ENCODE measurements at regions of chr6 and their contacts with region 1.

Region 1: GRCh38 chr6:10429638-10430427 is 15.0 kb upstream of the TFAP2A start:
- DNase-seq: no peak
- H3K4me3 ChIP-seq: no peak overlapping the region
- H3K27ac ChIP-seq: no peak overlapping the region
- H3K4me1 ChIP-seq: peaks cover 0 to 9% of the 10 kb centered on the region in 2 donors
- H3K27me3 ChIP-seq: no peaks in the 10 kb centered on the region
- CTCF ChIP-seq: peak in 1 of 3 experiments; percentile 50

Region 2: GRCh38 chr6:9789201-9789600 is 640.6 kb before region 1 on chr6:
- intact Hi-C with region 1: no loop called
- DNase-seq: no peak
- H3K4me3 ChIP-seq: no peak overlapping the region
- H3K27ac ChIP-seq: no peak overlapping the region
- H3K4me1 ChIP-seq: no peaks in the 10 kb centered on the region
- H3K27me3 ChIP-seq: no peaks in the 10 kb centered on the region
- CTCF ChIP-seq: no peak

Region 3: GRCh38 chr6:10030942-10031537 is 398.8 kb before region 1 on chr6:
- intact Hi-C with region 1: loop called (anchors 10 kb)
- DNase-seq: no peak
- H3K4me3 ChIP-seq: no peak overlapping the region
- H3K27ac ChIP-seq: no peak overlapping the region
- H3K4me1 ChIP-seq: no peaks in the 10 kb centered on the region
- H3K27me3 ChIP-seq: no peaks in the 10 kb centered on the region
- CTCF ChIP-seq: peak in 1 of 3 experiments; percentile 35

Region 4: GRCh38 chr6:10478187-10479040 is 48.6 kb after region 1 on chr6:
- intact Hi-C with region 1: no loop called
- DNase-seq: no peak
- H3K4me3 ChIP-seq: no peak overlapping the region
- H3K27ac ChIP-seq: no peak overlapping the region
- H3K4me1 ChIP-seq: no peaks in the 10 kb centered on the region
- H3K27me3 ChIP-seq: no peaks in the 10 kb centered on the region
- CTCF ChIP-seq: peak; percentile 27 to 64 (median 52)

Region 5: GRCh38 chr6:10567256-10568026 is 137.6 kb after region 1 on chr6:
- intact Hi-C with region 1: no loop called
- DNase-seq: no peak
- H3K4me3 ChIP-seq: no peak overlapping the region
- H3K27ac ChIP-seq: no peak overlapping the region
- H3K4me1 ChIP-seq: no peaks in the 10 kb centered on the region
- H3K27me3 ChIP-seq: no peaks in the 10 kb centered on the region
- CTCF ChIP-seq: no peak